Endothelial cell of umbilical vein (primary cell): ENCODE measurements at regions of chr11 and their contacts with region 1.

Region 1: GRCh38 chr11:95835768-95836488 is 45.6 kb downstream of the CEP57 start:
- DNase-seq: peak; percentile 77
- H3K4me3 ChIP-seq: no peak overlapping the region
- H3K27ac ChIP-seq: no peak overlapping the region
- H3K4me1 ChIP-seq: no peaks in the 10 kb centered on the region
- H3K27me3 ChIP-seq: no peaks in the 10 kb centered on the region
- CTCF ChIP-seq: peak; percentile 71 to 88
- POLR2A ChIP-seq: no peak

Region 2: DNA sequence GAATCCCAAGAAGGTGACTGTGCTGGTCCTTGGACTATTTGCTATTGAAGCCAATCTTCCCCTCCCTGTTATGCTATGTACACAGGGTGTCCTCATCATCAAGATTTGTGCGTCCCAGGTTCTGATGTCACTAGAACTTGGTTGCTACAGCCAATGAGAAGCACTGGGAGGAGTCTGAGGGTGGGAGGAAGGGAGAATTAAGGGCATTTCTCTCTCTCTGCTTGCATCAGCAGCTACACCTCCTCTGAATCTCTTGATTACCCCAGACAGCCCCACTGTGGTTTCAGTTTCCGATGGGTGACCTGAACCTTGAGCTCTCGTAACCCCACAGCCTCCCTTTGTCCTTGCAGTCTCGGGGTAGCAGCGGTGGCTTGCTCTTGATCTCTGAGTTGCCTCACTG is 392.5 kb before region 1 on chr11:
- CTCF ChIA-PET with region 1: no interaction called
- POLR2A ChIA-PET with region 1: no interaction called
- dilution Hi-C with region 1: no loop called
- intact Hi-C with region 1: no loop called
- DNase-seq: no peak
- H3K4me3 ChIP-seq: no peak overlapping the region
- H3K27ac ChIP-seq: no peak overlapping the region
- H3K4me1 ChIP-seq: no peaks in the 10 kb centered on the region
- H3K27me3 ChIP-seq: no peaks in the 10 kb centered on the region
- CTCF ChIP-seq: no peak
- POLR2A ChIP-seq: no peak

Region 3: GRCh38 chr11:95968585-95968984 is 132.7 kb after region 1 on chr11:
- CTCF ChIA-PET with region 1: interaction called, 25 read pairs
- POLR2A ChIA-PET with region 1: no interaction called
- dilution Hi-C with region 1: no loop called
- intact Hi-C with region 1: loop called (anchors 2 kb)
- DNase-seq: peak; percentile 13
- H3K4me3 ChIP-seq: no peak overlapping the region
- H3K27ac ChIP-seq: no peak overlapping the region
- H3K4me1 ChIP-seq: no peaks in the 10 kb centered on the region
- H3K27me3 ChIP-seq: no peaks in the 10 kb centered on the region
- CTCF ChIP-seq: peak; percentile 16 to 23
- POLR2A ChIP-seq: no peak

Region 4: GRCh38 chr11:96006037-96006436 is 170.1 kb after region 1 on chr11:
- CTCF ChIA-PET with region 1: no interaction called
- POLR2A ChIA-PET with region 1: no interaction called
- dilution Hi-C with region 1: no loop called
- intact Hi-C with region 1: no loop called
- DNase-seq: no peak
- H3K4me3 ChIP-seq: no peak overlapping the region
- H3K27ac ChIP-seq: no peak overlapping the region
- H3K4me1 ChIP-seq: no peaks in the 10 kb centered on the region
- H3K27me3 ChIP-seq: no peaks in the 10 kb centered on the region
- CTCF ChIP-seq: no peak
- POLR2A ChIP-seq: no peak

Region 5: GRCh38 chr11:96155627-96156378 is 319.9 kb after region 1 on chr11:
- CTCF ChIA-PET with region 1: interaction called, 12 read pairs
- POLR2A ChIA-PET with region 1: no interaction called
- dilution Hi-C with region 1: no loop called
- intact Hi-C with region 1: no loop called
- DNase-seq: peak; percentile 92
- H3K4me3 ChIP-seq: no peak overlapping the region
- H3K27ac ChIP-seq: peak overlapping the region; percentile 93
- H3K4me1 ChIP-seq: peaks cover 38% of the 10 kb centered on the region
- H3K27me3 ChIP-seq: no peaks in the 10 kb centered on the region
- CTCF ChIP-seq: peak; percentile 29 to 30
- POLR2A ChIP-seq: no peak

Region 6: GRCh38 chr11:96242971-96243647 is 407.2 kb after region 1 on chr11:
- CTCF ChIA-PET with region 1: interaction called, 3 read pairs
- POLR2A ChIA-PET with region 1: no interaction called
- dilution Hi-C with region 1: no loop called
- intact Hi-C with region 1: loop called (anchors 5 kb)
- DNase-seq: peak; percentile 97
- H3K4me3 ChIP-seq: peak overlapping the region in 2 of 3 experiments; percentile 42 to 58
- H3K27ac ChIP-seq: peak overlapping the region; percentile 74
- H3K4me1 ChIP-seq: peaks cover 19% of the 10 kb centered on the region
- H3K27me3 ChIP-seq: no peaks in the 10 kb centered on the region
- CTCF ChIP-seq: no peak
- POLR2A ChIP-seq: peak; percentile 46

Region 7: DNA sequence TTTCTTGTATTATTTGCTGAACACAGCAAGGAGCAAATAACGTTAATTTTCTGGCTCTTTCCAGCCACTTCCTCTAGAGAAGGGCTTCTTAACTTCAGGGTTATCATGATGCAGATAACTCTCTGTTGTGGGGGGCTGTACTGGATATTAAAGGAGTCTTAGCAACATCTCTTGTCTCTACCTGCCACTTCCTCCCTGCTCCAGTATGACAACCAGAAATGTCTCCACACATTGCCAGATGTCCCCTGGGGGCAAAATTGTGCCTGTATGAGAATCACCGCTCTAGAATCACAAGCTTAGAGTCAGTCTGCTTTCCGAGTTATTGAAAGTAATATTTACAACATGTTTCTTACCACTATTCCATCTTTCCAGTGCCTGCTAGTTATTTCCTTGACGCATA is 560.7 kb after region 1 on chr11:
- CTCF ChIA-PET with region 1: interaction called, 145 read pairs
- POLR2A ChIA-PET with region 1: interaction called, 3 read pairs
- dilution Hi-C with region 1: no loop called
- intact Hi-C with region 1: loop called (anchors 1 kb)
- DNase-seq: no peak
- H3K4me3 ChIP-seq: no peak overlapping the region
- H3K27ac ChIP-seq: no peak overlapping the region
- H3K4me1 ChIP-seq: no peaks in the 10 kb centered on the region
- H3K27me3 ChIP-seq: peaks cover 8 to 11% of the 10 kb centered on the region in 2 experiments
- CTCF ChIP-seq: no peak
- POLR2A ChIP-seq: no peak

Region 8: GRCh38 chr11:96424693-96425092 is 588.8 kb after region 1 on chr11:
- CTCF ChIA-PET with region 1: interaction called, 54 read pairs
- POLR2A ChIA-PET with region 1: no interaction called
- dilution Hi-C with region 1: no loop called
- intact Hi-C with region 1: loop called (anchors 1 kb)
- DNase-seq: peak; percentile 51
- H3K4me3 ChIP-seq: no peak overlapping the region
- H3K27ac ChIP-seq: no peak overlapping the region
- H3K4me1 ChIP-seq: peaks cover 2% of the 10 kb centered on the region
- H3K27me3 ChIP-seq: peaks cover 0 to 17% of the 10 kb centered on the region in 2 experiments
- CTCF ChIP-seq: no peak
- POLR2A ChIP-seq: no peak